ENCODE measurements at regions of chr14 and their contacts with region 1.

Region 1: DNA sequence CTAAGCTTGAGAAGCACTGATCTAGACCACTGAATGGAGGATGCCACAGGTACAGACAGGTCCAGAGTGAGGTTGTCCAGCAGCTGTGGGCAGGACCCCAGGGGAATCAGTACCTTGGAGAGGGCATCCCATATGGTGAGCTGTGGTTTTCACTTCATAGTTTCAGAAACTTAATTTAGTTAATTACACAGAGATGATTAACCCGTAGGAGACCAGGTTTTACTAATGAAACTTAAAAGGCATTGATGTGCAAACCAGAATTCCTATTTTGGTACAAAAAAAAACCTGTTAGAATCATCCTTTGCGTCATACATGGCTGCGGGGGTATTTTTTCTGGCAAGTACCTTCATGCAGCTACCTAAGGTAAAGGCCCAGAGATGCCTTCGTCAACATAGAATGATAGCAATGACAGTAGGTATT is 159.3 kb downstream of the DACT1 start:
- DNase-seq: no peak
- H3K4me3 ChIP-seq: no peak overlapping the region
- CTCF ChIP-seq: no peak

Region 2: GRCh38 chr14:57583396-57583795 is 1213.6 kb before region 1 on chr14:
- in situ Hi-C with region 1: no loop called
- DNase-seq: no peak
- H3K4me3 ChIP-seq: no peak overlapping the region
- CTCF ChIP-seq: no peak

Region 3: DNA sequence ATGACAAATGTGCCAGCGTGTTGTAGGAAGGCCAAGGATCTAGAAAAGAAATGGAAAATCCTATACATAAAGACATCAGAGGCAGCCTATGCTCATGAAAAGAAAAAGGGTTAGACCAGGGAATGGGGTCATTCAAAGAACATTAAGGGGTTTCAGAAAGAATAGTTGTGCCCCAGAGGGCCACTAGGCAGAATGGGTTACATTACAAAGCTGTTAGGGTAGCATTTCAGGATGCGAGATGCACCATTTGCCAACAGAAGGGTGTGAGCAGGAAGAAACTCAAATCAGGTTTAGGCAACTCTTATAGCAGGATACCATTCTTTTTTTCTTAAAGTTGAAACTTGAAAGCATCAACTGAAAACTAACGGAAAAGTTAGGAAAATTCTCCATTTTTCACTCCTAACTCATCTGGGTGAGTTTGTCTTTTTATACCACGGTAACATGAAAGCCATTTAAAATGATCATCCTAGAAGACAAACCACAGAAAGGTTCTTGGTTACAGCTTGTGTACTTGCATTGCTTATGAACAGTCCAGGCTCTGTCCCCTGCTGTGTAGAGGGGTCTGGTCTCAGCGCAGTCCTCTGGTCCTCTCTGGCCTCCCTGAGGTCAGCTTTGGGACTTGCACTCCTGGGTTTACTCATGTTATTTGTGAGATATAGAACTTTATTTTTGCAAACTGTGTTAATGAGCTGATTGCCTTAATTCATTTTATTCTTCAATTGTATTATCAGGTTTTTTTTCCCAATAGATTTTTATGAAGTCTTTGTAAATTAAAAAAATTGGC is 49.9 kb after region 1 on chr14:
- in situ Hi-C with region 1: no loop called
- DNase-seq: no peak
- H3K4me3 ChIP-seq: no peak overlapping the region
- CTCF ChIP-seq: no peak

Region 4: GRCh38 chr14:58864751-58865513 is 67.9 kb after region 1 on chr14:
- in situ Hi-C with region 1: loop called (anchors 5 kb)
- DNase-seq: peak; percentile 37
- H3K4me3 ChIP-seq: no peak overlapping the region
- CTCF ChIP-seq: no peak

Region 5: GRCh38 chr14:58882577-58883018 is 85.6 kb after region 1 on chr14:
- in situ Hi-C with region 1: no loop called
- DNase-seq: peak; percentile 62
- H3K4me3 ChIP-seq: no peak overlapping the region
- CTCF ChIP-seq: no peak

Measured in astrocyte of the cerebellum (primary cell).